Activated CD4-positive, alpha-beta memory T cell treated with anti-CD3 and anti-CD28 coated beads, Interleukin-2, amount 10 ng/mL, durations not matched to agents 7 days and 5 days (primary cell): ENCODE measurements at regions of chr6 and their contacts with region 1.

Region 1: GRCh38 chr6:35731736-35732532 is 4.9 kb upstream of the ARMC12 start:
- DNase-seq: peak; percentile 95
- H3K4me3 Mint-ChIP-seq: peak overlapping the region; percentile 83
- H3K27ac Mint-ChIP-seq: peak overlapping the region; percentile 94
- H3K4me1 Mint-ChIP-seq: peaks cover 72% of the 10 kb centered on the region
- H3K27me3 Mint-ChIP-seq: no peaks in the 10 kb centered on the region

Region 2: DNA sequence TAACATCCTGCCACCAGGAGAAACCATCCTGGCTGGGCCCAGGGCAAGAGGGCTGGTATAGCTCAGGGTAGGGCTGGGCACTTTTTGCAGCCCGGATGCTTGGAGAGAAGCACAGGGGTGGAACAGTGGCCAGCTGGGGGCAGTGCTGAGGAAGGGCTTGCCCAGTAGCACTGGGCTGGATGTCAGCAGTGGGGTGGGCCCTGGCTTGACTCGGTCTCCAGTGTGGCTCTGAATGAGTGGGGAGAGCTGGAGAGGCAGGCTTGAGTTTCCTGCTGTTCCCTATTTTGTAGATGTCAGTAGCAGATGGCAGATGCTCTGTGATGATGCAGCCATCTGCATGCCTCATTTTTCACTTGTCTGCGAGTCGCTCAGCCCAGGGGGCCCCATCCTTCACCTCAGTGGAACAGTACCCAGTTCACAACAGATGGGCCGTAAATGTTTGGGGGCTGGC is 162.9 kb before region 1 on chr6:
- CTCF ChIA-PET with region 1: interaction called, 19 read pairs
- POLR2A ChIA-PET with region 1: no interaction called
- DNase-seq: peak; percentile 48
- H3K4me3 Mint-ChIP-seq: no peak overlapping the region
- H3K27ac Mint-ChIP-seq: no peak overlapping the region
- H3K4me1 Mint-ChIP-seq: no peaks in the 10 kb centered on the region
- H3K27me3 Mint-ChIP-seq: peaks cover 21% of the 10 kb centered on the region

Region 3: DNA sequence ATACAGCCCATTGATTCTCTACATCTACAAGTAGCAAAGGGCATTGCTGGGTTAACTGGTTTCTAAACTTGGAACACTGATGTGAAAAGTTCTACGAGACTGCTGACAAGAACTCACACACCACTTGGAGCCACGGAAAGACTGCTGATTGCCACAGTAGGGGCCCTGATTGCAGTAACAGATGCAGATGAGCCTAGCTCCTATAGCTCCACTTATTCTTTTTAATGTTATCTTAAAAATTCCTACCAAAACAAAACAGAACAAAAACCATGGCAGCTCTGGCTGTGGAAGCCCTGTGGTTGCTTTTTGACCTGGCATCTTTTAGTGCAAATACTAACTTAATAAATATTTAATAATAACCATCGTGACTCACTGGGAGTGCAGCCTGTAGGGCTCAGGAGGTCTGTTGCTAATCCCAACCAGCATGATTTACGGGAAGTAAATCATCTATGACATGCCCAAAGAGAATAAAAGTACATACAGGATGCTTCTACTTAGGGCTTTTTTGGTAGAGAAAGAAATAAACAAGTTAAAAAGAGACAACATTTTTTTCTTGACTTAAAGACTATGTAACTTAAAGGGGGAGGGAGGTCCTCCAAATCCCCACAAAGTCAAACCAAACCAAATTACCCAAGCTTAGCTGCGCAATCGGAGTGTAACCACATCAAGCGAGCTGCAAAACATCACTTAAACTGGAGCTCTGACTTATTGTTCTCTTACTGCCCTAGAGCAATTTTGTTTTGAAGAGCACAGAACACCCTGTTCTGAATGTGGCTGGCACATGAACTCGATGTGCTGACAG is 130.4 kb before region 1 on chr6:
- CTCF ChIA-PET with region 1: interaction called, 18 read pairs
- POLR2A ChIA-PET with region 1: interaction called, 18 read pairs
- DNase-seq: peak; percentile 58
- H3K4me3 Mint-ChIP-seq: peak overlapping the region; percentile 60
- H3K27ac Mint-ChIP-seq: peak overlapping the region; percentile 91
- H3K4me1 Mint-ChIP-seq: peaks cover 48% of the 10 kb centered on the region
- H3K27me3 Mint-ChIP-seq: no peaks in the 10 kb centered on the region

Region 4: DNA sequence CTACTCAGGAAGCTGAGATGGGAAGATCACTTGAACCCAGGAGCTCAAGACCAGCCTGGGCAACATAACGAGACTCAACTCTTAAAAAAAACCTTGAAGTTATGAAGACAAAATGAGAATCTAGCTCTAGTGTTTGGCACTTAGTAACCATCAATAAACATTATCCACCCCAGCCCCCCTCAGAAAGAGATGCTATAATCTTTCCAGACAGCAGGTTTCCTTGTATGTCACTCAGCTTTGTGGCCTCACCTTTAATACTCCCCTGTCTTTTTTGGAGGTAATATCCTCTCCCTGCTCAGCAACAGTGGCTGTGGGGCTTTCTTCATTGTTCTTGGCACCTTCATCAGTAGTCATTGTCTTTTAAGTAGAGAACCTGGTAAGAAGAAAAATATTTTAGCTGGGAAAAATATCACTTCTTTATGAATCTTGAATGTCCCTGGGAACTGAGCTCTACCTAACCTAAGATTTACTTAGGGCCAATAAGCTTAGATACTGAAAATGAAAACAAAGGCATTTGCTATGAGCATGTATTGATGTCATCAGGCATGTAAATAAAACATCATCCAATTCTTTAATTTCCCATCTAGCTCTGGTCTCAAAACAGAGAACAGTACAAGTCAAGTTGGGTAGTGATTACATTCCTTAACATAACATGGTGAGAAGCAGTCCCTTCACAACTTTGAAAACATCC is 89.3 kb before region 1 on chr6:
- CTCF ChIA-PET with region 1: interaction called, 18 read pairs
- POLR2A ChIA-PET with region 1: interaction called, 3 read pairs
- DNase-seq: no peak
- H3K4me3 Mint-ChIP-seq: no peak overlapping the region
- H3K27ac Mint-ChIP-seq: no peak overlapping the region
- H3K4me1 Mint-ChIP-seq: peaks cover 34% of the 10 kb centered on the region
- H3K27me3 Mint-ChIP-seq: no peaks in the 10 kb centered on the region

Region 5: DNA sequence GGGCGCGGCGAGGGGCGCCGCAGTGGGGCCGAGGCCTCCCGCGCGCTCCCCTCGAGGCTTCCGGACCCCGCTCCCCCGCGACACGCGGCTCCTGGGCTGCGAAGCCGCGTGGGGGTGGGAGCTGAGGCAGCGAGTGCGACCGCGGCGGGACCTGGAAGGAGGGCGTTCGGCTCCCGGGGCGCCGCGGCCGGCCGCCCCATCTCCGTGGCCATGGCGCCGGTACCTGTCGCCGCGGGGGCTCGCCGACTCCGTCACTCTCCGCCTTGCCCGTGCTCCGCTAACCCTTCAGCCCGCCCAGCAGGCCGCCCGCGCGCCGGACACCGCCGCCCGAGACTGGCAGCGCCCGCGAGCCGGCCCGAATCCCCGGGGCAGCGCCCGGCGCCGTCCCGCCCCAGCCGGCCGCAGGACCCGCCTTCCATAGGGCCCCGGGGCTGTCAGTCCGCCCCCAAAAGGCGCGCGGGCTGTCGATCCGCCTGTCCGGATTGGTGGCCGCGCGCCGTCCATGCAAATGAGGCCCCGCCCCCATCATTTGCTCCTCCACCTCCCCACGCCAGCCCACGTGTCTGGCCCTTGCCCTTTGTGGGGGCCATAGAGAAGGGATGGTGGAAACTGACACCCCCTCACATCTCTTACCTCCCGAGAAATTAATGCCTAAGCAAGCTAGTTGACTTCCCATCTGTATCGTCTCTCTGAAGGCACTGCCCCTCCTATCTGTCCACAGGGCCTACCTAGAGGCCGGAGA is 43.2 kb before region 1 on chr6 and contains the start of gene FKBP5:
- CTCF ChIA-PET with region 1: interaction called, 24 read pairs
- POLR2A ChIA-PET with region 1: interaction called, 36 read pairs
- DNase-seq: peak; percentile 91
- H3K4me3 Mint-ChIP-seq: peak within 1 kb of the TSS; percentile 90
- H3K27ac Mint-ChIP-seq: peak within 1 kb of the TSS; percentile 82
- H3K4me1 Mint-ChIP-seq: peaks cover 15% of the 10 kb centered on the region
- H3K27me3 Mint-ChIP-seq: no peaks in the 10 kb centered on the region
- total RNA-seq, gene FKBP5: 51.1 to 51.5 TPM